Heart left ventricle (tissue), 16 donors: ENCODE measurements at regions of chr2 and their contacts with region 1.

Region 1: GRCh38 chr2:80073134-80073561 is 231.4 kb downstream of the LRRTM1 start:
- DNase-seq: peak in 3 of 5 donors; percentile 8 to 26 (median 19)
- ATAC-seq: peak in 3 of 4 donors; percentile 56 to 64 (median 63)
- H3K4me3 ChIP-seq: no peak overlapping the region
- H3K27ac ChIP-seq: no peak overlapping the region
- H3K4me1 ChIP-seq: no peaks in the 10 kb centered on the region
- H3K27me3 ChIP-seq: peaks cover 0 to 9% (median 0%) of the 10 kb centered on the region in 9 donors
- CTCF ChIP-seq: peak; percentile 44 to 72 (median 58)
- POLR2A ChIP-seq: no peak

Region 2: GRCh38 chr2:80135001-80135400 is 61.9 kb after region 1 on chr2:
- intact Hi-C with region 1: no loop called
- DNase-seq: no peak
- ATAC-seq: no peak
- H3K4me3 ChIP-seq: no peak overlapping the region
- H3K27ac ChIP-seq: no peak overlapping the region
- H3K4me1 ChIP-seq: no peaks in the 10 kb centered on the region
- H3K27me3 ChIP-seq: no peaks in the 10 kb centered on the region
- CTCF ChIP-seq: no peak
- POLR2A ChIP-seq: no peak

Region 3: GRCh38 chr2:80238692-80239469 is 165.7 kb after region 1 on chr2:
- intact Hi-C with region 1: loop called in 3 of 10 experiments (anchors 5 to 10 kb)
- DNase-seq: peak in 1 of 5 donors; percentile 18
- ATAC-seq: peak; percentile 64 to 72 (median 68)
- H3K4me3 ChIP-seq: no peak overlapping the region
- H3K27ac ChIP-seq: peak overlapping the region in 1 of 12 donors; percentile 43
- H3K4me1 ChIP-seq: peaks cover 0 to 22% (median 3%) of the 10 kb centered on the region in 12 donors
- H3K27me3 ChIP-seq: no peaks in the 10 kb centered on the region
- CTCF ChIP-seq: peak; percentile 50 to 83 (median 67)
- POLR2A ChIP-seq: no peak

Region 4: DNA sequence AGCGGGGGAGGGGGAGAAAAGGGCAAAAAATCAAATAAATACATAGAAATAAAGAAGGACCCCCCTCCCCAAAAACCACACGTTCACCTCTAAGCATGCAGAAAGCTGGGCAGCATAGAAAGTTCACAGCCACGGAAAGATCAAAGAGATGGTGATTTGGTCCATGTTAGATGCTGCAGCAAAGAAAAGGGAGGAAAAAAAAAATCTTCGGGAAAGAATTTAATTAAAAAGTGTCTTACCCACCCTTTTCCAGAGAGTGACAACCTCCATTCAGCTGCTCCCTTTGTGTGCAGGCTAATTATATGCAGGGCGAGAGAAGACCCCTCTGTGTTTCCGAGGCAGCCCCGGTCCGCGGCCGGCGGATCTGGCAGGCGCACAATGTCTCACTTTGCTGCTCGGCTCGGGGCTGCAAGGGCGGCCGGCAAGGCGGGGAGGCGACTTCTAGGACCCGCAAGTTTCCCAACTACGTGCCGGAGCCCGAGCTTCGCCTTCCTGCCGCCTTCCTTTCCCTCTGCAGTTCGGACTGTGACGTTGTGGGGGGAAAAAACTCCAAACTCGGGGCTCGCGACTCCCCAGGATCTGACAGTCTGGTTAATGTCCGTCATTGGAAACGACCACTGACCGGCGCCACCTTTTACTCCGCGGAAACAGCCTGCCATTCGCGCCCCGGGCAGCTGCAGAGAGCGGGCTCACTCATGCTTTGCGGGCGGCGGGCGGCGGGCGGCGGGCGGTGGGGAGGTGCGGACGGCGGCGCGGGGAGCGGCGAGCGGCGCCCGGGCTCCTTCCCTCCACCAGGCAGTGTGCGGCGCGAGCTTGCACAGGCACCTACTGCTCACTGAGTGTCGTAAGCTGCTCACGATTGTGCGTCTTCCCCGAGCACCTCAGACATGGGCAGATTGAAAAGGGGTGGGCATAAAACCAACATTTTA is 231.0 kb after region 1 on chr2 and contains the start of gene LRRTM1:
- intact Hi-C with region 1: loop called in 1 of 10 experiments (anchors 10 kb)
- DNase-seq: peak in 2 of 5 donors; percentile 8 to 29
- ATAC-seq: peak in 3 of 4 donors; percentile 44 to 72 (median 60)
- H3K4me3 ChIP-seq: peak within 1 kb of the TSS; percentile 25 to 54 (median 44)
- H3K27ac ChIP-seq: no peak within 1 kb of the TSS
- H3K4me1 ChIP-seq: peaks cover 0 to 17% (median 10%) of the 10 kb centered on the region in 12 donors
- H3K27me3 ChIP-seq: peaks cover 18 to 67% (median 48%) of the 10 kb centered on the region in 9 donors
- CTCF ChIP-seq: peak in 1 of 12 donors; percentile 16
- POLR2A ChIP-seq: no peak
- total RNA-seq, gene LRRTM1: 0.09 to 0.93 (median 0.23) TPM in 6 of 9 donors, not detected in the others

Region 5: GRCh38 chr2:80326214-80326613 is 253.1 kb after region 1 on chr2:
- intact Hi-C with region 1: loop called in 1 of 10 experiments (anchors 10 kb)
- DNase-seq: peak in 1 of 5 donors; percentile 37
- ATAC-seq: peak in 3 of 4 donors; percentile 50 to 60 (median 50)
- H3K4me3 ChIP-seq: no peak overlapping the region
- H3K27ac ChIP-seq: no peak overlapping the region
- H3K4me1 ChIP-seq: peaks cover 0 to 5% (median 0%) of the 10 kb centered on the region in 12 donors
- H3K27me3 ChIP-seq: peaks cover 0 to 19% (median 7%) of the 10 kb centered on the region in 9 donors
- CTCF ChIP-seq: peak in 11 of 12 donors; percentile 47 to 70 (median 61)
- POLR2A ChIP-seq: no peak

Region 6: GRCh38 chr2:80499095-80499494 is 425.9 kb after region 1 on chr2:
- intact Hi-C with region 1: loop called in 9 of 10 experiments (anchors 2 to 10 kb)
- DNase-seq: peak in 4 of 5 donors; percentile 32 to 39 (median 38)
- ATAC-seq: peak in 3 of 4 donors; percentile 65 to 70 (median 67)
- H3K4me3 ChIP-seq: no peak overlapping the region
- H3K27ac ChIP-seq: no peak overlapping the region
- H3K4me1 ChIP-seq: no peaks in the 10 kb centered on the region
- H3K27me3 ChIP-seq: no peaks in the 10 kb centered on the region
- CTCF ChIP-seq: peak; percentile 43 to 82 (median 64)
- POLR2A ChIP-seq: no peak

Region 7: DNA sequence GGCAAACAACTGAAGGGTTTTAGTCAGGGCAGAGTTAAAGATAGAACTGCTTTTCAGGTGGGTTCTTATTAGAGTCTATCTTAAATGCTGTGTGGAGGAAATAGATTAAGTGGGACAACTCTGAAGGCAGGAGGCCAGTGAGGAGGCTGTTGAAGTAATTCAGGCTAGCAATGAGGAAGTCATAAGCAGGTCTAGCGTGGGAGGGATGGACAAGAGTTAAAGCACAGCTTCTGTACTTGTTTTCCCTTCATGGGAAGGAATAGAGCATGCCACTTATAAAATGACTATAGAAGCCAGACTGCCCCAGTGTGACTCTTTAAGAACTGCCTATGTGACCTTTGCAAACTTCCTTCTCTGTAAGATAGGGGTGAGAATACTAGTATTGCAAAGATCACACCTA is 433.4 kb after region 1 on chr2:
- intact Hi-C with region 1: loop called in 6 of 10 experiments (anchors 5 to 10 kb)
- DNase-seq: no peak
- ATAC-seq: no peak
- H3K4me3 ChIP-seq: no peak overlapping the region
- H3K27ac ChIP-seq: no peak overlapping the region
- H3K4me1 ChIP-seq: no peaks in the 10 kb centered on the region
- H3K27me3 ChIP-seq: no peaks in the 10 kb centered on the region
- CTCF ChIP-seq: no peak
- POLR2A ChIP-seq: no peak